ENCODE measurements at regions of chr7 and their contacts with region 1.

Region 1: DNA sequence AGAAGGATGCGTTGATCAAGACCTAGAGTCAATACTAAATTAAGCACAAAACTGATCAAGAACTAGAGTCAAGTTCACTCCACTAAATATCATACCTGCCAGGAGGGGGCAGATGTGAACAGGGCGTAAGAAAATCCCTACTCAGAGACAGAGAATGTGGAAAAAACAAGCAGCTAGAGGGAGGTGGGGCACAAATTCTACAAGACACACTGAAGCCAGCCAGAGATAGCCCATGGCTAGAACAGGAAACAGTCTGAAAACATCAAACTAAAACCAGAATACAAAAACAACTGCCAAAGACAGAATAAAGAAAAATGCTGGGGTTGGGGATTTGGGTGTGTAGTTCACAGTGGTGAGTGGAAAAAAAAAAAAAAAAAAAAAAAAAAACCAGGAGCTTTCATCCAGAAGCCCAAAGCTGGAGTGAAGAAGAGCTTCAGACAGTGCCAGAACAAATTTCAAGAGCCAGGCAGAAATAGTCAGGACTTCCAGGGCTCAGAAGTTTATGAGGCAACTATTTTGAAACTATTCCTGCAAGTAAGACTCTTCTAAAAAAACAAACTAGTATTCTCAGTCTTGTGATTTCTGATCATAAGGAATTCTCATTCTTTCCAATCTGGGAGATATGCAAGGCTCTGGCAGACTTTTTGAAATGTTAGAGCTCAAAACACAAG is 118.3 kb downstream of the CCDC71L start:
- DNase-seq: peak; percentile 57
- ATAC-seq: peak; percentile 95
- H3K4me3 ChIP-seq: no peak overlapping the region
- H3K27ac ChIP-seq: no peak overlapping the region
- H3K4me1 ChIP-seq: no peaks in the 10 kb centered on the region; the same call in 1 of the 2 replicates
- H3K27me3 ChIP-seq: no peaks in the 10 kb centered on the region
- CTCF ChIP-seq: peak; percentile 70 to 77 (median 74)
- EP300 ChIP-seq: no peak
- POLR2A ChIP-seq: no peak
- RAD21 ChIP-seq: peak; percentile 94

Region 2: DNA sequence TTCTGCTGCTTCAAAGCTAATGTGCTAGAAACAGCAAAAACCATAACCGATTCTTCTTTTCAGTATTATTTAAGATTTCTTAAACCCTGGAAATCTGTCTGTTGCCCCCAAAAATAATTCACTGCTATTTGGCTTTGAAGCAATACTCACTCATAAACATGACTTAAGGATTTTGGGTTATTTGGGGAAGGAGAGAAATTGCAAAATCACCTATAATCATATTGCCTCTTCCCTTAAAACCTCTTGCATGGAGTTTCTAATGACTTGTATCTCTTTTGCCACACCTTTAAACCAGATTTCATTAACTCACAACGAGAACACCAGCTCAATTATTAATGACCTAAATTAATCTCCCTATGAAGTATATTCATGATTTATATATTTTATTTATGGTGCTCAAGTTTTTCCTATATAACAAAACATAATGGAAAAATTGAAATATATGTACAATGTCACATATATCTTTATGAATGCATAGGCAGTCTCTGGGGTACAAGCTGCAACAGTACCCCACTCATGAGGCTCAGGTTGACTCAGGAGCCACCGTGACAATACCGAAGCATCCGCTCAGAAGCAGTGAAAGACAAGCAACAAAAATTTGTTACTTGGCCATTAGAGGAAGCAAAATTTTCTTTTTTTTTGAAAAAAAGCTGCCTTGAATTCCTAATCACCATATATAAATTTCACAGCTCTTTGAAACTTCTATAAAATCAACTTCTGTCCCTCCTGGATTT is 260.9 kb before region 1 on chr7:
- CTCF ChIA-PET with region 1: no interaction called
- POLR2A ChIA-PET with region 1: no interaction called
- RAD21 ChIA-PET with region 1: no interaction called
- SMC1A ChIA-PET with region 1: no interaction called
- in situ Hi-C with region 1: no loop called
- intact Hi-C with region 1: no loop called
- DNase-seq: no peak
- ATAC-seq: no peak
- H3K4me3 ChIP-seq: peak overlapping the region; percentile 82
- H3K27ac ChIP-seq: peak overlapping the region; percentile 83
- H3K4me1 ChIP-seq: peaks cover 3% of the 10 kb centered on the region; the same call in 1 of the 2 replicates
- H3K27me3 ChIP-seq: no peaks in the 10 kb centered on the region
- CTCF ChIP-seq: no peak
- EP300 ChIP-seq: no peak
- POLR2A ChIP-seq: no peak
- RAD21 ChIP-seq: no peak

Region 3: GRCh38 chr7:106448992-106449859 is 93.5 kb before region 1 on chr7:
- CTCF ChIA-PET with region 1: no interaction called
- POLR2A ChIA-PET with region 1: no interaction called
- RAD21 ChIA-PET with region 1: no interaction called
- SMC1A ChIA-PET with region 1: no interaction called
- in situ Hi-C with region 1: no loop called
- intact Hi-C with region 1: no loop called
- DNase-seq: no peak
- ATAC-seq: no peak
- H3K4me3 ChIP-seq: no peak overlapping the region
- H3K27ac ChIP-seq: no peak overlapping the region
- H3K4me1 ChIP-seq: no peaks in the 10 kb centered on the region
- H3K27me3 ChIP-seq: no peaks in the 10 kb centered on the region
- CTCF ChIP-seq: no peak
- EP300 ChIP-seq: no peak
- POLR2A ChIP-seq: no peak
- RAD21 ChIP-seq: no peak

Region 4: GRCh38 chr7:106598663-106599342 is 56.1 kb after region 1 on chr7:
- CTCF ChIA-PET with region 1: interaction called, 11 read pairs
- POLR2A ChIA-PET with region 1: no interaction called
- RAD21 ChIA-PET with region 1: interaction called, 18 read pairs
- SMC1A ChIA-PET with region 1: interaction called, 15 read pairs
- in situ Hi-C with region 1: no loop called
- intact Hi-C with region 1: no loop called
- DNase-seq: peak; percentile 71
- ATAC-seq: peak; percentile 99
- H3K4me3 ChIP-seq: no peak overlapping the region
- H3K27ac ChIP-seq: no peak overlapping the region
- H3K4me1 ChIP-seq: no peaks in the 10 kb centered on the region
- H3K27me3 ChIP-seq: no peaks in the 10 kb centered on the region; a peak in 1 of 4 replicates
- CTCF ChIP-seq: no peak
- EP300 ChIP-seq: no peak
- POLR2A ChIP-seq: no peak
- RAD21 ChIP-seq: no peak

Region 5: GRCh38 chr7:106652909-106653308 is 110.2 kb after region 1 on chr7:
- CTCF ChIA-PET with region 1: interaction called, 171 read pairs
- POLR2A ChIA-PET with region 1: no interaction called
- RAD21 ChIA-PET with region 1: interaction called, 89 read pairs
- SMC1A ChIA-PET with region 1: interaction called, 86 read pairs
- in situ Hi-C with region 1: loop called (anchors 5 kb)
- intact Hi-C with region 1: no loop called
- DNase-seq: no peak
- ATAC-seq: no peak
- H3K4me3 ChIP-seq: no peak overlapping the region
- H3K27ac ChIP-seq: no peak overlapping the region
- H3K4me1 ChIP-seq: no peaks in the 10 kb centered on the region
- H3K27me3 ChIP-seq: no peaks in the 10 kb centered on the region
- CTCF ChIP-seq: no peak
- EP300 ChIP-seq: no peak
- POLR2A ChIP-seq: no peak
- RAD21 ChIP-seq: no peak

Region 6: GRCh38 chr7:106736508-106737201 is 194.0 kb after region 1 on chr7:
- CTCF ChIA-PET with region 1: interaction called, 126 read pairs
- POLR2A ChIA-PET with region 1: interaction called, 5 read pairs
- RAD21 ChIA-PET with region 1: interaction called, 91 read pairs
- SMC1A ChIA-PET with region 1: interaction called, 148 read pairs
- in situ Hi-C with region 1: no loop called
- intact Hi-C with region 1: loop called (anchors 1 kb)
- DNase-seq: peak; percentile 48
- ATAC-seq: peak; percentile 98
- H3K4me3 ChIP-seq: no peak overlapping the region
- H3K27ac ChIP-seq: no peak overlapping the region
- H3K4me1 ChIP-seq: peaks cover 15% of the 10 kb centered on the region
- H3K27me3 ChIP-seq: no peaks in the 10 kb centered on the region
- CTCF ChIP-seq: peak; percentile 75 to 86 (median 80)
- EP300 ChIP-seq: no peak
- POLR2A ChIP-seq: no peak
- RAD21 ChIP-seq: peak; percentile 97

Region 7: DNA sequence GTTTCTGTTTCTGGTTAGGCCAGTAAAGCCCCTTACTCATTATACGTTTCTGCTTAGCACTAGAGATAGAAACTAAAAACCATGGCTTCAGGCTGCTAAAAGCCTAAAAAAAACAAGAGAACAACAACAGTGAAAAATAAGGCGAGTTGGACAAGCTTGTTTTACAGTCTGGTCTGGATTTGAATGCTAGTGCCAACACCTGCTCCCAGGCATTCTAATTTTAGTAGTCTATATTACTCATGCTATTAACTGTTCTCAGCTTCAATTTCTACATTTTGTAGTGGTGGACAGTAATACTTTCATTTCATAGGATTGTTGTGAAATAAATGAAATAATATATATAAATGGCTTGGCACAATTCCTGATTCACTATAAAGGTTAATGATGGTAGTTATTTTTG is 734.6 kb after region 1 on chr7:
- CTCF ChIA-PET with region 1: no interaction called
- POLR2A ChIA-PET with region 1: no interaction called
- RAD21 ChIA-PET with region 1: no interaction called
- SMC1A ChIA-PET with region 1: no interaction called
- in situ Hi-C with region 1: no loop called
- intact Hi-C with region 1: no loop called
- DNase-seq: no peak
- ATAC-seq: peak; percentile 39; the same call in 2 of the 3 replicates
- H3K4me3 ChIP-seq: no peak overlapping the region
- H3K27ac ChIP-seq: no peak overlapping the region
- H3K4me1 ChIP-seq: no peaks in the 10 kb centered on the region
- H3K27me3 ChIP-seq: no peaks in the 10 kb centered on the region
- CTCF ChIP-seq: no peak
- EP300 ChIP-seq: no peak
- POLR2A ChIP-seq: no peak
- RAD21 ChIP-seq: no peak